ENCODE measurements at regions of chr5 and their contacts with region 1.

Region 1: DNA sequence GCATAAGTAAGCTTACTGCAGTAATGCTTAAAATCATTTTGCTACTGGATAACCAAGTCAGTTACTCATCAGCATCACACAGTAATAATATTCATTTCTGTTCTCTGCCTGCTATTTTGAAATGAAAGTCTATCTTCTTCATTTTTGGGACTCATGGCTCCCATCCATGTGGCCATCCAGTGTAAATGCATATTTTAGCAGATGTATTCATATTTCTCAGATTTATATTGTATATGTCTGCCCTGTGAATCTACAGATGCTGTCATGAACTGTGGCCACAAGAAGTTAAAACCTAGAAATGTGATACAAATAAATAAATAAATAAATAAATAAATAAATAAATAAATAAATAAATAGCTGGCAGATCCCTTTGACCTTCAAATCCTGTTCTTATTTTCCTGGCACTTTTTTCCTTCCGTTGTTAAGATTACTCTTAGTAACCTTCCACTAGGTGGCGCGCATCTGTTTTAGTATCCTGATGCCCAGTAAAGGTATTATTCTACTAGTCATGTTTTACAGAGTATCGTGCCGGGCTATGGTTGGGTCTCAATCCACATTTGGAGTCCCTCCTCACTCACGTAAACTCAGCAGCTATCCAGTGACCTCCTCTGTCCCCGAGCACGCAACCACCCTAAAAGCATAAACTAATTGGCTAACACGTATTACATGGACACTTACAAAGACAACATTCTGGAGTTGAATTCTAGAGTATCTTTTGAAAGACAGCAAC is 79.2 kb upstream of the IL7R start:
- DNase-seq: peak; percentile 35 to 76 (median 67)
- ATAC-seq: peak; percentile 83
- H3K4me3 ChIP-seq: peak overlapping the region; percentile 14
- H3K4me3 Mint-ChIP-seq: peak overlapping the region; percentile 6 to 85 (median 74)
- H3K27ac ChIP-seq: peak overlapping the region; percentile 52
- H3K27ac Mint-ChIP-seq: peak overlapping the region; percentile 76 to 99 (median 92)
- H3K4me1 ChIP-seq: peaks cover 39 to 50% of the 10 kb centered on the region in 2 donors
- H3K4me1 Mint-ChIP-seq: peaks cover 19 to 87% (median 62%) of the 10 kb centered on the region in 7 donors
- H3K27me3 ChIP-seq: no peaks in the 10 kb centered on the region
- H3K27me3 Mint-ChIP-seq: no peaks in the 10 kb centered on the region

Region 2: DNA sequence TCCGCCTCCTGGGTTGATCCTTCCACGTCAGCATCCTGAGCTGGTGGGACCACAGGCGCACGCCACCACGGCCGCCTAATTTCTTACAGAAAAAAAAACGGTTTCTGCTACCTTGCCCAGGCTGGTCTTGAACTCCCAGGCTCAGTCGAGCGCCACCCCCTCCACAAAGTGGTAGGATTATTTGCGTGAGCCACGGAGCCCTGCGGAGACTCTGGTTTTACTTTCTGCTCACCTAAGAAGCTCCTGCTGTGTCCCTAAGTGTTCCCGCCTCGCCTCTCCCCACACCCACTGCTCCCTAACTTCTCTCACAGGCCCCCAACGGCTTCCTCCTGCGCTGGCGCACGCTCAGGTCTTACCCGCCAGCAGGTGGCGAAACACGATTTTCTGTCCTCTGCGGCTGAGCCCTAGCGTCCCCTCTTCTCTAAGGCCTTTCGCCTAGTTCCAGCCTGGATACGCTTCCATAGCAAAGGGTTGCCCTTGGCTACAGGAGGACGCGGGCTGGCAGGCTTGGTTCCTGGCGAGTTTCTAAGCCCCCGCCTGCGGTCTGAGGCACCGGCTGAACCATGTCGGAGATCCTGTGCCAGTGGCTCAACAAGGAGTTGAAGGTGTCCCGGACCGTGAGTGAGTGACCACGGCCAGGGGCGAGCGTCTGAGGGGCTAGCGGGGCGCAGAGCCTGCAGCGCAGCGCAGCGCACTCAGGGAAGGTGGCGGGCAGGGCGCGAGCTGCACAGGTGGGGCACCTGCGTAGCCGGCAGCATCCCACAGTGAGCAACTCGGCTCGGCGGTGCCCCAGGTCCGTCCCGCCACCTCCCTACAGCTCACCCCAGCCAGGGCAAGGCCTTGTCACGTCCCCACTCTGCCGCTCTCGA is 159.9 kb before region 1 on chr5 and contains the start of gene SPEF2:
- CTCF ChIA-PET with region 1: no interaction called
- POLR2A ChIA-PET with region 1: interaction called, 4 read pairs
- intact Hi-C with region 1: loop called (anchors 1 to 10 kb)
- DNase-seq: peak; percentile 57 to 76 (median 71)
- ATAC-seq: peak; percentile 95
- H3K4me3 ChIP-seq: peak within 1 kb of the TSS; percentile 95
- H3K4me3 Mint-ChIP-seq: peak within 1 kb of the TSS; percentile 91 to 96 (median 94)
- H3K27ac ChIP-seq: peak within 1 kb of the TSS; percentile 27
- H3K27ac Mint-ChIP-seq: peak within 1 kb of the TSS; percentile 79 to 96 (median 89)
- H3K4me1 ChIP-seq: peaks cover 4 to 12% of the 10 kb centered on the region in 2 donors
- H3K4me1 Mint-ChIP-seq: peaks cover 14 to 34% (median 26%) of the 10 kb centered on the region in 7 donors
- H3K27me3 ChIP-seq: no peaks in the 10 kb centered on the region
- H3K27me3 Mint-ChIP-seq: no peaks in the 10 kb centered on the region
- total RNA-seq, gene SPEF2: 7.1 to 13.5 (median 9.9) TPM

Region 3: DNA sequence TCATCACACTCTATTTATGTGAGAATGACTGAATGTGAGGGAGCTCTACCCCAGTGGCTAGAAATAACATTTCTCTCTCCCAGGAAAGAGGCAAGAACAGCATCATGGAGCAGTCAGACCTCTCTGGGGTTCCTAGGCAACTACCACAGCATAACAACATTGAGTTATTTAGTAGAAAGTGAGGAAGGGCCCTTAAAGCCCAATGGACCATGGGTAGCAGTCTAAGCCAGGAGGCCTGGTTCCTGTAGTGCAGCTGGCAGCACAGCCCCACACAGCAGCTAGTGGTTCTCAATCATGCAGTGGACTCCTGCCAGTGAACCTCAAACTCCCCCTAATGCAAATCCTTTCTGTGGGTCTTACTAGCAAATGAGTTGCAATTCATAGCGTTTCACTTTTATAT is 104.5 kb before region 1 on chr5:
- CTCF ChIA-PET with region 1: interaction called, 4 read pairs
- POLR2A ChIA-PET with region 1: interaction called, 5 read pairs
- intact Hi-C with region 1: loop called (anchors 5 kb)
- DNase-seq: peak in 8 of 9 donors; percentile 30 to 68 (median 52)
- ATAC-seq: peak; percentile 88
- H3K4me3 ChIP-seq: peak overlapping the region; percentile 14
- H3K4me3 Mint-ChIP-seq: peak overlapping the region in 9 of 10 donors; percentile 47 to 81 (median 66)
- H3K27ac ChIP-seq: peak overlapping the region; percentile 62
- H3K27ac Mint-ChIP-seq: peak overlapping the region; percentile 87 to 96 (median 92)
- H3K4me1 ChIP-seq: peaks cover 36 to 41% of the 10 kb centered on the region in 2 donors
- H3K4me1 Mint-ChIP-seq: peaks cover 20 to 88% (median 75%) of the 10 kb centered on the region in 7 donors
- H3K27me3 ChIP-seq: no peaks in the 10 kb centered on the region
- H3K27me3 Mint-ChIP-seq: no peaks in the 10 kb centered on the region

Region 4: GRCh38 chr5:35822511-35822910 is 45.0 kb after region 1 on chr5:
- CTCF ChIA-PET with region 1: interaction called, 50 read pairs
- POLR2A ChIA-PET with region 1: interaction called, 238 read pairs
- intact Hi-C with region 1: no loop called
- DNase-seq: peak in 7 of 9 donors; percentile 49 to 83 (median 76)
- ATAC-seq: peak; percentile 82
- H3K4me3 ChIP-seq: peak overlapping the region; percentile 7
- H3K4me3 Mint-ChIP-seq: peak overlapping the region; percentile 38 to 75 (median 70)
- H3K27ac ChIP-seq: peak overlapping the region; percentile 62
- H3K27ac Mint-ChIP-seq: peak overlapping the region; percentile 84 to 98 (median 95)
- H3K4me1 ChIP-seq: peaks cover 91 to 92% of the 10 kb centered on the region in 2 donors
- H3K4me1 Mint-ChIP-seq: peaks cover 55 to 94% (median 88%) of the 10 kb centered on the region in 7 donors
- H3K27me3 ChIP-seq: no peaks in the 10 kb centered on the region
- H3K27me3 Mint-ChIP-seq: no peaks in the 10 kb centered on the region

Region 5: GRCh38 chr5:35869685-35870277 is 92.3 kb after region 1 on chr5:
- CTCF ChIA-PET with region 1: interaction called, 61 read pairs
- POLR2A ChIA-PET with region 1: interaction called, 979 read pairs
- intact Hi-C with region 1: no loop called
- DNase-seq: no peak
- ATAC-seq: no peak
- H3K4me3 ChIP-seq: no peak overlapping the region
- H3K4me3 Mint-ChIP-seq: peak overlapping the region in 7 of 10 donors; percentile 44 to 87 (median 51)
- H3K27ac ChIP-seq: peak overlapping the region; percentile 65
- H3K27ac Mint-ChIP-seq: peak overlapping the region; percentile 47 to 97 (median 86)
- H3K4me1 ChIP-seq: peaks cover 41 to 54% of the 10 kb centered on the region in 2 donors
- H3K4me1 Mint-ChIP-seq: peaks cover 46 to 99% (median 93%) of the 10 kb centered on the region in 7 donors
- H3K27me3 ChIP-seq: no peaks in the 10 kb centered on the region
- H3K27me3 Mint-ChIP-seq: no peaks in the 10 kb centered on the region

Measured in naive thymus-derived CD4-positive, alpha-beta T cell (primary cell).